ENCODE measurements at regions of chr1 and their contacts with region 1.

Region 1: GRCh38 chr1:117758444-117759316 is 152.8 kb downstream of the TENT5C start:
- DNase-seq: peak; percentile 84
- ATAC-seq: peak; percentile 86
- H3K4me3 ChIP-seq: peak overlapping the region in 3 of 5 experiments; percentile 34 to 55 (median 47)
- H3K4me3 Mint-ChIP-seq: peak overlapping the region; percentile 84
- H3K27ac ChIP-seq: no peak overlapping the region
- H3K27ac Mint-ChIP-seq: no peak overlapping the region
- H3K4me1 ChIP-seq: peaks cover 10 to 13% of the 10 kb centered on the region in 2 donors
- H3K4me1 Mint-ChIP-seq: peaks cover 13% of the 10 kb centered on the region
- H3K27me3 ChIP-seq: peaks cover 0 to 14% (median 8%) of the 10 kb centered on the region in 4 experiments
- H3K27me3 Mint-ChIP-seq: peaks cover 29% of the 10 kb centered on the region
- CTCF ChIP-seq: peak; percentile 88

Region 2: GRCh38 chr1:117067533-117068370 is 690.9 kb before region 1 on chr1:
- CTCF ChIA-PET with region 1: interaction called, 14 read pairs
- POLR2A ChIA-PET with region 1: no interaction called
- intact Hi-C with region 1: no loop called
- DNase-seq: peak; percentile 53
- ATAC-seq: peak; percentile 76
- H3K4me3 ChIP-seq: no peak overlapping the region
- H3K4me3 Mint-ChIP-seq: no peak overlapping the region
- H3K27ac ChIP-seq: no peak overlapping the region
- H3K27ac Mint-ChIP-seq: no peak overlapping the region
- H3K4me1 ChIP-seq: no peaks in the 10 kb centered on the region
- H3K4me1 Mint-ChIP-seq: peaks cover 7% of the 10 kb centered on the region
- H3K27me3 ChIP-seq: no peaks in the 10 kb centered on the region
- H3K27me3 Mint-ChIP-seq: no peaks in the 10 kb centered on the region
- CTCF ChIP-seq: peak; percentile 75

Region 3: GRCh38 chr1:117367047-117368018 is 391.3 kb before region 1 on chr1 and contains the start of gene MAN1A2:
- CTCF ChIA-PET with region 1: interaction called, 5 read pairs
- POLR2A ChIA-PET with region 1: no interaction called
- intact Hi-C with region 1: loop called (anchors 10 kb)
- DNase-seq: peak; percentile 90
- ATAC-seq: peak; percentile 76
- H3K4me3 ChIP-seq: peak within 1 kb of the TSS; percentile 84 to 94 (median 92)
- H3K4me3 Mint-ChIP-seq: peak within 1 kb of the TSS; percentile 96
- H3K27ac ChIP-seq: peak within 1 kb of the TSS; percentile 86 to 88
- H3K27ac Mint-ChIP-seq: peak within 1 kb of the TSS; percentile 98
- H3K4me1 ChIP-seq: peaks cover 34 to 46% of the 10 kb centered on the region in 2 donors
- H3K4me1 Mint-ChIP-seq: peaks cover 63% of the 10 kb centered on the region
- H3K27me3 ChIP-seq: no peaks in the 10 kb centered on the region
- H3K27me3 Mint-ChIP-seq: no peaks in the 10 kb centered on the region
- CTCF ChIP-seq: no peak
- total RNA-seq, gene MAN1A2: 54.0 and 55.6 TPM in 2 replicates

Region 4: GRCh38 chr1:117479086-117479485 is 279.6 kb before region 1 on chr1:
- CTCF ChIA-PET with region 1: no interaction called
- POLR2A ChIA-PET with region 1: no interaction called
- intact Hi-C with region 1: no loop called
- DNase-seq: no peak
- ATAC-seq: no peak
- H3K4me3 ChIP-seq: no peak overlapping the region
- H3K4me3 Mint-ChIP-seq: no peak overlapping the region
- H3K27ac ChIP-seq: no peak overlapping the region
- H3K27ac Mint-ChIP-seq: no peak overlapping the region
- H3K4me1 ChIP-seq: no peaks in the 10 kb centered on the region
- H3K4me1 Mint-ChIP-seq: no peaks in the 10 kb centered on the region
- H3K27me3 ChIP-seq: no peaks in the 10 kb centered on the region
- H3K27me3 Mint-ChIP-seq: no peaks in the 10 kb centered on the region
- CTCF ChIP-seq: no peak

Region 5: GRCh38 chr1:117527566-117528102 is 231.0 kb before region 1 on chr1:
- CTCF ChIA-PET with region 1: interaction called, 511 read pairs
- POLR2A ChIA-PET with region 1: no interaction called
- intact Hi-C with region 1: no loop called
- DNase-seq: no peak
- ATAC-seq: no peak
- H3K4me3 ChIP-seq: no peak overlapping the region
- H3K4me3 Mint-ChIP-seq: no peak overlapping the region
- H3K27ac ChIP-seq: no peak overlapping the region
- H3K27ac Mint-ChIP-seq: no peak overlapping the region
- H3K4me1 ChIP-seq: no peaks in the 10 kb centered on the region
- H3K4me1 Mint-ChIP-seq: no peaks in the 10 kb centered on the region
- H3K27me3 ChIP-seq: no peaks in the 10 kb centered on the region
- H3K27me3 Mint-ChIP-seq: no peaks in the 10 kb centered on the region
- CTCF ChIP-seq: no peak

Region 6: DNA sequence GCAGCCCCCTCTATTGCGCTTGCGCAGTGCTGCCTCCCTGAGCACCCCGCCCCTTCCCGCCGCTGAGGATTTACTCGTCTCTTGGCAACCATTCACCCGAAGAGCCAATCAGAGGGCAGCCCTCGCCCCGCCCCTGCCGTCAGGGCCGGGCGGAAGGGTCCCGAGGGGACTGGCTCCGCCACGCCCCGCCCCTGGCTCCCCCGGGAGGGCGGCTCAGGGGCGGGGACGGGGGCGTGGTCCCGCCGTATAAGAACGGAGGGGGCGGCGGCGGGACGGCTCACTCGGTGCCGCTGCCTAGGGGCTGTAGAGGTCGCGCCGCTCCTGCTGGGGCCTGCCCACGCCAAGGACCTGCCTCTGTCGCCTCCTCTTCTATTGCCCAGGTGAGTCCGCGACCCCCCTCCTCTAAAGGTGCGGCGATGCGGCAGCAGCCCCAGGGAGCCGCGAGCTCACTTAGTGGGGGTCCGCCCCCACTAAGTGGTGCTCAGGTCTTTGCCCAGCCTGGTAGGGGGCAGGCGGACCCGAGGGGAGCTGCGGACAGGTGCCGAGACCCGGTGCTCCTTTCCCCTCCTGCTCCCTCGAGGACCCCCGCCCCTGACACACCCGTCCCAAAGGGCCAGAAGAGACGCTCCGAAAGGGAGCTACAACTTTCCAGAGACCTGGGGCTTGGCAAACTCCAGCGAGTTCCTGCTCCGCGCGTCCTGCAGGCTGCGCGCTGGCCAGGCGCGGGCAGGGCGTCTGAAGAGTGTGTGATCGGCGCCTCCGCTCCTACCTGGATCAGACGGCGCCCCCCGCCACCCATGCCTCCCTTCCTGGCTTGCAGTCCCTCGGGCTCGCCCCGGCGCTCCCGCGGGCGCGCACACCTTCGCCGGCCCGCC is 152.7 kb before region 1 on chr1 and contains the start of gene TENT5C:
- CTCF ChIA-PET with region 1: interaction called, 29 read pairs
- POLR2A ChIA-PET with region 1: interaction called, 3 read pairs
- intact Hi-C with region 1: loop called (anchors 2 kb)
- DNase-seq: peak; percentile 99
- ATAC-seq: peak; percentile 88
- H3K4me3 ChIP-seq: peak within 1 kb of the TSS; percentile 95 to 99 (median 97)
- H3K4me3 Mint-ChIP-seq: peak within 1 kb of the TSS; percentile 99
- H3K27ac ChIP-seq: peak within 1 kb of the TSS; percentile 88 to 96
- H3K27ac Mint-ChIP-seq: peak within 1 kb of the TSS; percentile 96
- H3K4me1 ChIP-seq: peaks cover 38 to 49% of the 10 kb centered on the region in 2 donors
- H3K4me1 Mint-ChIP-seq: peaks cover 52% of the 10 kb centered on the region
- H3K27me3 ChIP-seq: peaks cover 0 to 1% (median 0%) of the 10 kb centered on the region in 4 experiments
- H3K27me3 Mint-ChIP-seq: no peaks in the 10 kb centered on the region
- CTCF ChIP-seq: no peak
- total RNA-seq, gene TENT5C: 112 TPM in 2 replicates

Region 7: GRCh38 chr1:117674521-117675397 is 83.9 kb before region 1 on chr1:
- CTCF ChIA-PET with region 1: interaction called, 84 read pairs
- POLR2A ChIA-PET with region 1: no interaction called
- intact Hi-C with region 1: loop called (anchors 1 kb)
- DNase-seq: peak; percentile 81
- ATAC-seq: peak; percentile 77
- H3K4me3 ChIP-seq: no peak overlapping the region
- H3K4me3 Mint-ChIP-seq: peak overlapping the region; percentile 44
- H3K27ac ChIP-seq: no peak overlapping the region
- H3K27ac Mint-ChIP-seq: peak overlapping the region; percentile 84
- H3K4me1 ChIP-seq: peaks cover 36 to 43% of the 10 kb centered on the region in 2 donors
- H3K4me1 Mint-ChIP-seq: peaks cover 57% of the 10 kb centered on the region
- H3K27me3 ChIP-seq: no peaks in the 10 kb centered on the region
- H3K27me3 Mint-ChIP-seq: no peaks in the 10 kb centered on the region
- CTCF ChIP-seq: peak; percentile 73

Region 8: GRCh38 chr1:117895482-117896114 is 136.9 kb after region 1 on chr1:
- CTCF ChIA-PET with region 1: interaction called, 15 read pairs
- POLR2A ChIA-PET with region 1: no interaction called
- intact Hi-C with region 1: loop called (anchors 5 kb)
- DNase-seq: peak; percentile 66
- ATAC-seq: no peak
- H3K4me3 ChIP-seq: no peak overlapping the region
- H3K4me3 Mint-ChIP-seq: no peak overlapping the region
- H3K27ac ChIP-seq: no peak overlapping the region
- H3K27ac Mint-ChIP-seq: no peak overlapping the region
- H3K4me1 ChIP-seq: no peaks in the 10 kb centered on the region
- H3K4me1 Mint-ChIP-seq: peaks cover 2% of the 10 kb centered on the region
- H3K27me3 ChIP-seq: no peaks in the 10 kb centered on the region
- H3K27me3 Mint-ChIP-seq: no peaks in the 10 kb centered on the region
- CTCF ChIP-seq: peak; percentile 97